Sciatic nerve (tissue), 2 donors: ENCODE measurements at regions of chr12 and their contacts with region 1.

Region 1: DNA sequence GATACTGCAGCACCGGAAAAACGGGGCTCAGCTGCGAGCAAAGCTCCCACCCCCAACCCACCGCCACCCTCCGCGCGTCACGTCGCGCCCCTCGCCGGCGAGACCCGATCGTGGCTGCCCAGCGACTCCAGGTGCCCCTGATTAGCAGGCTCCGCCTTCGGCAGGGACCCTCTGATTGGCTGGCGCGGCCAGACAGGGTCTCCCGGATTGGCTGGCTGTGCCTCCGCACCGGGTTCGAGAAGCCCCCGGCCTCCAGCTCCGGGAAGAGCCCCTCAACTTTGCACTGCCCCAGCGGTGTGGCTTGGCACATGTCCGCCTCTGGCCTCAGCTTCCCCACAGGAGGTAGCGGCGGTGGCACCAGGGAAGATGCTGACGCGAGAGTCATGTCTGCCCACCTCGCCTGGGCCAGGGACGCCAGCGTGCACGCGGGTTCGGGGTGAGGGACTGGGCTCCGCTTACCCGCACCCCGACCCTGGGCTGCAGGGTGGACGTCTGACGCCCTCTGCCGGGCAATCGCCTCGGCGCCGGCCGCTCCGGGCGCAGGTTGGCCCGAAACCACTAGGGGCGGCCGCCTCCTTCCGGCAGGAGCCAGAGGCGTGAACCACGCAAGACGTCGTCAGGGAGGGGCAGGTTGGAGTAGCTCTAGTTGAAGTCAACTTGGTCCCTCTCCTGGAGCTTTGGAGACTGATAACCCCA is 498 bp upstream of the RHOF start:
- DNase-seq: peak; percentile 95
- ATAC-seq: peak; percentile 81

Region 2: GRCh38 chr12:121811434-121812319 is 17.7 kb after region 1 on chr12:
- intact Hi-C with region 1: loop called (anchors 2 kb)
- DNase-seq: peak; percentile 83
- ATAC-seq: peak; percentile 85

Region 3: DNA sequence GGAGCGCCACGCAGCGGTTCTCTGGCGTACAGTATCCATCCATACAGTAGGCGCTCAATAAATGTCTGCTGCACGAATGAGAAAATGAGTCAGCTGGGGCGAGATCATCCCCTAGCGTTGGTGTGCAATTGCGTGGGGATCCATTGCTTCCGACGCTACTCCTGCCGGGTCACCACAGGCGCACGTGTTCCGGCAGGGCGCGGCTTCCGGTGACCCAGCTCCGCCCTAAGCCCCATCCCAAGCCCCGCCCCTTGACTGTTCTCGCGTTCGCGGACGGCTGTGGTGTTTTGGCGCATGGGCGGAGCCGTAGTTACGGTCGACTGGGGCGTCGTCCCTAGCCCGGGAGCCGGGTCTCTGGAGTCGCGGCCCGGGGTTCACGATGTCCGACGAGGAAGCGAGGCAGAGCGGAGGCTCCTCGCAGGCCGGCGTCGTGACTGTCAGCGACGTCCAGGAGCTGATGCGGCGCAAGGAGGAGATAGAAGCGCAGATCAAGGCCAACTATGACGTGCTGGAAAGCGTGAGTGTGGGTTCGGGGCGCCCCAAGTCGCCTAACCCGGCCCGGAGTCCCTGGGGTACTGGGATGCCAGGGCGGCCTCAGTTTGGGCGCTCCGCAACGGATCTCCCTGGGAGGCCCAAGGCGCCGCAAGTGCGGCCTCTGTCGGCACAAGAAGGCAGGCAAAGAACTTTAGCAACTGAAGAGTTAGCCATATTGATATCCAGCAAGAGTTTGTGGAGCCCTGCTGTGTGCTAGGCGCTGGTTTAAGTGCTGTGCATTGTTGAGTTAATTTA is 94.7 kb after region 1 on chr12 and contains the start of gene PSMD9:
- intact Hi-C with region 1: loop called (anchors 10 kb)
- DNase-seq: peak; percentile 99
- ATAC-seq: peak; percentile 100
- total RNA-seq, gene PSMD9: 34.3 TPM

Region 4: GRCh38 chr12:121917979-121918678 is 124.1 kb after region 1 on chr12 and contains the start of gene CFAP251:
- intact Hi-C with region 1: no loop called
- DNase-seq: peak; percentile 95
- ATAC-seq: peak; percentile 87
- total RNA-seq, gene CFAP251: 3.8 TPM